Gastrocnemius medialis (tissue), 4 donors: ENCODE measurements at regions of chr13 and their contacts with region 1.

Region 1: DNA sequence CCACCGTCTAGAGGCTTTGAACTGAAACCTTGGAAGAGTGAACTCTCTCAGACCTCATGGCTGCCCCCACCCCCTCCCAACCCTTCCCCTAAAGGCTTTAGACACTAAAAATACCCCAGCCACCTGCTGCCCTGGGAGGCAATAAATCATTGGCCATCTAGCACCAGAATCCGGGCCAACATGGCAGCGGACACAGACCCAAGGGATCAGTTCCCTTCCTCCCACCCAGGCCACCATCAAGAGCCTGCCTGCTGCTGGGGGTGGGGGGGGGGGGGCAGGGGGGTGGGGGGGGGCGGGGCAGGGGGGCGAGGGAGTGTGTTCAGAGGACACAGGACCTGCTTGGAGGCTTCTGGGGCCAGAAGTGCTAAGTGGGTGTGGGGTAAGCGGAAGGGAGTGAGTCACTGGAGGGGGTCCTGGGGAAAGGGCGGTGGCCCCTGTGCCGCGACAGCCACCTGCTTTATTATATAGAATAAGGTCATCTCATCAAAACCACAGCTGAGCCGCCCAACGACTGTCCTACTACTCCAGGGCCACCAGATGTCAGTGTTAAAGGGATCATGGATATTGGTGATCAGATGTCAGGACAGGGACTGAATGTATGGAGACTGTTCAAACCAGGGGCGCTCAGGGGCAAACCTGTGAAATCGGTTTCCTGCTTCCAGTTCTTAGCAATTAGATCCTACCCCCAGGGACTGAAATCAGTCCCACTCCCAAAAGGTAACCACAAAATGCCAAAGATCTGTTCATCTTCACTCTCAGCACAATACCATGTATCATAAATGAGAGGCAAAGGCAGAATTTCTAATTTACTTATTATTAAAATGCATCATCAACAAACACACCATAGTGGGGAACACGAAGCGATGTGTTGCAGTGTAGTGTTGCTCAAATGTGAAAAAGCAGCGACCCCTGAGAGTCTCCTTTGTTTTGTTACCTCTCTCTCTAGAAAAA is 24.3 kb downstream of the ARL11 start:
- DNase-seq: peak; percentile 87 to 95
- ATAC-seq: peak; percentile 59 to 71
- H3K4me3 ChIP-seq: peak overlapping the region in 3 of 4 donors; percentile 25 to 38 (median 30)
- H3K27ac ChIP-seq: peak overlapping the region; percentile 95 to 98 (median 96)
- H3K4me1 ChIP-seq: peaks cover 80 to 81% of the 10 kb centered on the region in 2 donors
- H3K27me3 ChIP-seq: no peaks in the 10 kb centered on the region
- CTCF ChIP-seq: peak; percentile 61 to 78 (median 71)
- POLR2A ChIP-seq: no peak

Region 2: DNA sequence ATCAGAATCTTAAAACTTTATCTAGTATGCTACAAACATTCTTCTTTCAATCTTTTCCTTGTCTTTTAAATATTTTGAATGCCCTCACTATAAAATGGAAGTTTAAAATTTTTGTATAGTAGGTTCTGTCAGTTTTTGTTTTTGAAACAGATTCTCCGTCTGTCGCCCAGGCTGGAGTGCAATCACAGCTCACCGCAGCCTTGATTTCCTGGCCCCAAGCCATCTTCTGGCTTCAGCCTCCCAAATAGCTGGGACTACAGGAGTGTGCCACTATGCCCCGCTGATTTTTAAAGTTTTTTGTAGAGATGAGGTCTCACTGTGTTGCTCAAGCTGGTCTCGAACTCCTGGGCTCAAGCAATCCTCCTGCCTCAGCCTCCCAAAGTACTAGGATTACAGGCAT is 136.2 kb before region 1 on chr13:
- in situ Hi-C with region 1: no loop called
- intact Hi-C with region 1: no loop called
- DNase-seq: no peak
- ATAC-seq: no peak
- H3K4me3 ChIP-seq: no peak overlapping the region
- H3K27ac ChIP-seq: no peak overlapping the region
- H3K4me1 ChIP-seq: no peaks in the 10 kb centered on the region
- H3K27me3 ChIP-seq: no peaks in the 10 kb centered on the region
- CTCF ChIP-seq: no peak
- POLR2A ChIP-seq: no peak

Region 3: DNA sequence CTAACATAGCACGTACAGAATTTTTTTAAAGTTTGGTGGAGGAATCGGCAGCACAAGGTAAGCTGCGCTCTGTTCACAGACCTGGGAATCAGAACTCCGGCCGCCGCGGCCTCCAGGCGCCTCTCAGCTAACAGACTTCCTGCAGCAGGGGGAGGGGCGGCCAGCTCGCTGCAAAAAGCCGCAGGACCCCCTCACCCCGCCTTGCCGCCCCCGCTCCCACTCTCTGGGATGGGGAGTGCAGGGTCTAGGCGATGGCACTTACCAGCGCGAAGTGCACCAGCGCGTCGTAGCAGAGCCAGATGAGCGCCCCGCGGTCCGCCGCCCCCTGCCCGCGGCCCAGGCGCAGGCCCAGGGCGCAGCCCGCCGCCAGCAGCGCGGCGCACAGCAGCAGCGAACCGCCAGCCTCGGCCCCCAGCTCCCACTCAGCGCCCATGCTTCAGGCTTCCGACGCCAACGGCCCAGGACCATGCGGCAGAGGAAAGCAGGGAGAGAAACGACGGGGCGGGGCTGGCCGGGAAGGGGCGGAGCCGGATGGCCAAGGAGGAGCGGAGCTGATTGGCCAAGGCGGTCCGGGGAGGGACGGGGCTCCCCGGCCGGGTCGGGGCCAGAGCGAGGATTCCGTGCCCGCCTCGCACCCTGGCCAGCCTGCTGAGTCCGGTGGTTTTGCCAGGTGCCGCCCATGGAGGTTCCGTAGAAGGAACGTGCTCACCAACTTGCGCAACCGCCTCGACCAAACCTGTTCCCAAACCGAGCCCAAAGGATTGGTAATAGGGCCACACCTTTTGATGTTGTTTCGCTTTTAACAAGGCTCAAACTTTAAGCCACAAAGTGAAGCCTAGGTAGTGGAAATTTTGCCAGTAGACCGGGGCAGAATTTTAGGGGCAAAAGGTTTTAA is 38.6 kb after region 1 on chr13 and contains the start of gene EBPL:
- in situ Hi-C with region 1: no loop called
- intact Hi-C with region 1: loop called (anchors 2 kb)
- DNase-seq: peak; percentile 90 to 91
- ATAC-seq: peak; percentile 92 to 95
- H3K4me3 ChIP-seq: peak within 1 kb of the TSS; percentile 63 to 81 (median 72)
- H3K27ac ChIP-seq: peak within 1 kb of the TSS; percentile 76 to 89 (median 84)
- H3K4me1 ChIP-seq: peaks cover 13 to 15% of the 10 kb centered on the region in 2 donors
- H3K27me3 ChIP-seq: no peaks in the 10 kb centered on the region
- CTCF ChIP-seq: no peak
- POLR2A ChIP-seq: peak in 1 of 2 donors; percentile 40
- total RNA-seq, gene EBPL: 3.8 to 11.0 (median 8.8) TPM

Region 4: DNA sequence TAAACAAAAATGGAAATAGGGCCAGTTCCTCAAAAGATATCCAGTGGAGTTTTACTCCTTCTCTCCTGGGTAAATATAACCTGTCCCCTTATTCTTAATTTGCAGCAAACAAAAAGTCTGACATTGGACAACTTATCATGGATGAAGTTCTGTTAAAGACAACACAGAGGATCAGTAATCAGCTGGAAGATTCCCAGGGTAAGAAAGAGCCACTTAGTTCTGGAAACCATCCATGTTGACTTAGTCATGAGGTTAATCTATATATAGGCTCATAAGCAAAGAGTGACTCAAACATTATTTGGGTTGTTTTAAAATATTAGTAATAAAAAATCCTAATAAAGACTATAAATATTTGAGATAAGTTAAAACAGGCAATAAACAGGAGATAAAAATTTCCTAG is 79.1 kb after region 1 on chr13:
- in situ Hi-C with region 1: no loop called
- intact Hi-C with region 1: loop called (anchors 2 kb)
- DNase-seq: no peak
- ATAC-seq: peak; percentile 73 to 79
- H3K4me3 ChIP-seq: no peak overlapping the region
- H3K27ac ChIP-seq: peak overlapping the region; percentile 66 to 86 (median 72)
- H3K4me1 ChIP-seq: peaks cover 23 to 32% of the 10 kb centered on the region in 2 donors
- H3K27me3 ChIP-seq: no peaks in the 10 kb centered on the region
- CTCF ChIP-seq: no peak
- POLR2A ChIP-seq: no peak

Region 5: GRCh38 chr13:49840266-49840665 is 187.6 kb after region 1 on chr13:
- in situ Hi-C with region 1: loop called (anchors 5 to 10 kb)
- intact Hi-C with region 1: no loop called
- DNase-seq: no peak
- ATAC-seq: no peak
- H3K4me3 ChIP-seq: no peak overlapping the region
- H3K27ac ChIP-seq: no peak overlapping the region
- H3K4me1 ChIP-seq: no peaks in the 10 kb centered on the region
- H3K27me3 ChIP-seq: no peaks in the 10 kb centered on the region
- CTCF ChIP-seq: no peak
- POLR2A ChIP-seq: no peak

Region 6: DNA sequence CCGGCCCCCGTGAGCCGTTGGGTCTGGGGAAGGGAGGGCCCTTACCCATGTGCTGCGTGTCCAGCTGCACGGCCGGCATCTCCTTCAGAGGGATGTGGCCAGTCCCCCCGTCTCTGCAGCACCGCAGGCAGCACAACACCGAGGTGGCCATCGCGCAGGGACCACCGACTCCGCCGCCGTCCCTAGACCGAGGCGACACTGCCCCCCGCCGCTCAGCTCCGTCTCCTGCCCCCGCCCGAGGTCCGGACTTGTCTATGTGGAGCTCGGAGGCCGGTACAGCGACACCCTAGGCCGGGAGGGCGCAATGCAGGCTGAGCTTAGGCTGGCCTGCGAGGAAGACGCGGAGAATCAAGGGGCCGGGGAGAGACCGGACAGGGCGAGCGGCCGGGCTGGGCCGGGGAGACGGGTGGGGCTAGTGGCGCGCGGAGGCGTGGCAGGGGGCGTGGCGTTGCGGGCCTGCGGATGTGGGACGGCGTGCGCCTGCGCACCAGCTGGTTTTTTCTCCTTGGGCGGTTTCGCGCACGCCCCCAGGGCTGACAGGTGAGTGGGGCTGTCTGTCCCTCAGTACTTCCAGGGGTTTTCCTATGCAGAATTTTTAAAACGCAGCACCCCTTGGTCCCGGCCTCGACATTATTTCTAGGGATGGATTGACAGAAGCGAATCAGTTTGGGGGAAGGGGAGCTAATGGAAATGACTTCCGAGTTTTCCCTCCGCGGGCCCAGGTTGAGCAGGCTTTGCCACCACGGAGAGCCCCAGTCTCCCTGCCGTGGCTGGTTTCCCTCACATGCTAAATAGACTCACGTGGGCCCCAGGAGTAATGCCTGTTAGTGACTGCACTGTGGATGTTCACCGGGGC is 283.7 kb after region 1 on chr13 and contains the start of gene SPRYD7:
- in situ Hi-C with region 1: no loop called
- intact Hi-C with region 1: loop called (anchors 5 kb)
- DNase-seq: peak; percentile 96 to 98
- ATAC-seq: peak; percentile 92 to 93
- H3K4me3 ChIP-seq: peak within 1 kb of the TSS; percentile 80 to 98 (median 88)
- H3K27ac ChIP-seq: peak within 1 kb of the TSS; percentile 87 to 95 (median 92)
- H3K4me1 ChIP-seq: peaks cover 49 to 54% of the 10 kb centered on the region in 2 donors
- H3K27me3 ChIP-seq: no peaks in the 10 kb centered on the region
- CTCF ChIP-seq: peak; percentile 88 to 95 (median 93)
- POLR2A ChIP-seq: peak; percentile 77 to 83
- total RNA-seq, gene SPRYD7: 9.8 to 24.7 (median 17.9) TPM